GM12878 (cell line): ENCODE measurements at regions of chrX and their contacts with region 1.

Region 1: GRCh38 chrX:153667956-153668396 is 5.6 kb downstream of the PNCK start:
- DNase-seq: peak; percentile 12
- ATAC-seq: peak; percentile 95
- H3K4me3 ChIP-seq: no peak overlapping the region
- H3K27ac ChIP-seq: no peak overlapping the region
- H3K4me1 ChIP-seq: no peaks in the 10 kb centered on the region
- H3K27me3 ChIP-seq: no peaks in the 10 kb centered on the region
- CTCF ChIP-seq: peak; percentile 70 to 77 (median 76)
- EP300 ChIP-seq: no peak
- POLR2A ChIP-seq: no peak
- RAD21 ChIP-seq: peak; percentile 59

Region 2: GRCh38 chrX:152941328-152942106 is 726.5 kb before region 1 on chrX:
- CTCF ChIA-PET with region 1: interaction called, 25 read pairs
- POLR2A ChIA-PET with region 1: no interaction called
- RAD21 ChIA-PET with region 1: interaction called, 6 read pairs
- SMC1A ChIA-PET with region 1: no interaction called
- in situ Hi-C with region 1: loop called (anchors 5 kb)
- intact Hi-C with region 1: loop called (anchors 5 kb)
- DNase-seq: peak; percentile 69
- ATAC-seq: peak; percentile 97
- H3K4me3 ChIP-seq: peak overlapping the region; percentile 72
- H3K27ac ChIP-seq: peak overlapping the region; percentile 37; the same call in 1 of the 2 replicates
- H3K4me1 ChIP-seq: no peaks in the 10 kb centered on the region
- H3K27me3 ChIP-seq: no peaks in the 10 kb centered on the region; a peak in 2 of 4 replicates
- CTCF ChIP-seq: peak; percentile 72 to 85 (median 75)
- EP300 ChIP-seq: no peak
- POLR2A ChIP-seq: peak; percentile 64
- RAD21 ChIP-seq: peak; percentile 71

Region 3: GRCh38 chrX:152958524-152959465 is 709.2 kb before region 1 on chrX:
- CTCF ChIA-PET with region 1: interaction called, 4 read pairs
- POLR2A ChIA-PET with region 1: no interaction called
- RAD21 ChIA-PET with region 1: interaction called, 4 read pairs
- SMC1A ChIA-PET with region 1: interaction called, 3 read pairs
- in situ Hi-C with region 1: no loop called
- intact Hi-C with region 1: loop called (anchors 2 kb)
- DNase-seq: peak; percentile 55
- ATAC-seq: peak; percentile 100
- H3K4me3 ChIP-seq: peak overlapping the region; percentile 53; the same call in 1 of the 2 replicates
- H3K27ac ChIP-seq: no peak overlapping the region
- H3K4me1 ChIP-seq: no peaks in the 10 kb centered on the region
- H3K27me3 ChIP-seq: no peaks in the 10 kb centered on the region
- CTCF ChIP-seq: peak; percentile 87 to 97 (median 89)
- EP300 ChIP-seq: no peak
- POLR2A ChIP-seq: 0 out of 2 replicates have a peak, but pooled peaks have one; percentile 38
- RAD21 ChIP-seq: peak; percentile 90

Region 4: DNA sequence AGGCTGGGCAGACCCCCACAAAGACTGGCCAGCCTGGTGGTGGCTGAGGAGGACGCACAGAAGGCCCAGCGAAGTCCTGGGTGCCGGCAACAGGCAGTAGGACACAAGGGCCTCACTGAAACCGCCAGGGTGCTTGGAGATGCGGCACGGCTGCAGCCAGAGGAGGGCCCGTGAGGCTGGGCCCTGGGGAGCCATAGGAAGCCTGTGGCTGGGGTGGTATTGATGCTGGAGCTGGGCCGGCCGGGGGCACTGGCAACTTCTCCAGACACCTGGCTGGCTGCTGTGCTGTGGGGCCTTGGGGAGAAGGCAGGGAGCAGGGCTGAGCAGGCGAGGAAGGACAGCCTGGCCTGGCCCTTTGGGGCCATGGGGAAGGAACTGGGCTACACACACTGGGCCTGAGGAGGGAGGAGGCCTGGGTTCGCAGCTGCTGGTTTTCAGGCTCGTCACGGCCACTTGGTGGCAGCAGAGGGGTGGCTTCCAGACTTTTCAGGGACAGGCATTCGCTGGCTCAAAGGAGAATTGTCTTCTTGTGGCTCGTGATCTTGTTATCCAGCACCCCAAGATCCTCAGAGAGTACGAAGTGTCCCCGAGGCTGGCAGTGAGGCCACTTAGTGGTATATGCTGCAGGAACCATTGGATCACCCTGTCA is 113.3 kb before region 1 on chrX:
- CTCF ChIA-PET with region 1: interaction called, 28 read pairs
- POLR2A ChIA-PET with region 1: no interaction called
- RAD21 ChIA-PET with region 1: interaction called, 12 read pairs
- SMC1A ChIA-PET with region 1: interaction called, 3 read pairs
- in situ Hi-C with region 1: no loop called
- intact Hi-C with region 1: loop called (anchors 2 kb)
- DNase-seq: no peak
- ATAC-seq: peak; percentile 94
- H3K4me3 ChIP-seq: no peak overlapping the region
- H3K27ac ChIP-seq: no peak overlapping the region
- H3K4me1 ChIP-seq: no peaks in the 10 kb centered on the region
- H3K27me3 ChIP-seq: no peaks in the 10 kb centered on the region; a peak in 1 of 4 replicates
- CTCF ChIP-seq: peak; percentile 74 to 81 (median 79)
- EP300 ChIP-seq: no peak
- POLR2A ChIP-seq: no peak
- RAD21 ChIP-seq: peak; percentile 73

Region 5: GRCh38 chrX:153657161-153657560 is 10.8 kb before region 1 on chrX:
- CTCF ChIA-PET with region 1: interaction called, 13 read pairs
- POLR2A ChIA-PET with region 1: no interaction called
- RAD21 ChIA-PET with region 1: interaction called, 8 read pairs
- SMC1A ChIA-PET with region 1: no interaction called
- in situ Hi-C with region 1: no loop called
- intact Hi-C with region 1: no loop called
- DNase-seq: no peak
- ATAC-seq: no peak
- H3K4me3 ChIP-seq: no peak overlapping the region
- H3K27ac ChIP-seq: no peak overlapping the region
- H3K4me1 ChIP-seq: no peaks in the 10 kb centered on the region
- H3K27me3 ChIP-seq: no peaks in the 10 kb centered on the region
- CTCF ChIP-seq: no peak
- EP300 ChIP-seq: no peak
- POLR2A ChIP-seq: no peak
- RAD21 ChIP-seq: no peak

Region 6: GRCh38 chrX:153862369-153863250 is 194.6 kb after region 1 on chrX:
- CTCF ChIA-PET with region 1: no interaction called
- POLR2A ChIA-PET with region 1: no interaction called
- RAD21 ChIA-PET with region 1: no interaction called
- SMC1A ChIA-PET with region 1: no interaction called
- in situ Hi-C with region 1: no loop called
- intact Hi-C with region 1: no loop called
- DNase-seq: no peak
- ATAC-seq: no peak
- H3K4me3 ChIP-seq: no peak overlapping the region
- H3K27ac ChIP-seq: no peak overlapping the region
- H3K4me1 ChIP-seq: no peaks in the 10 kb centered on the region
- H3K27me3 ChIP-seq: no peaks in the 10 kb centered on the region; a peak in 1 of 4 replicates
- CTCF ChIP-seq: no peak
- EP300 ChIP-seq: no peak
- POLR2A ChIP-seq: no peak
- RAD21 ChIP-seq: no peak